ENCODE measurements at regions of chr14 and their contacts with region 1.

Region 1: GRCh38 chr14:69574263-69574953 is at the start of gene CCDC177:
- DNase-seq: peak; percentile 45 to 73
- H3K4me3 ChIP-seq: peak within 1 kb of the TSS; percentile 32; the same call in 1 of the 2 replicates
- H3K27ac ChIP-seq: no peak within 1 kb of the TSS
- H3K4me1 ChIP-seq: peaks cover 11% of the 10 kb centered on the region
- H3K27me3 ChIP-seq: peaks cover 16% of the 10 kb centered on the region
- CTCF ChIP-seq: peak; percentile 93
- total RNA-seq, gene CCDC177: not detected in 2 replicates

Region 2: DNA sequence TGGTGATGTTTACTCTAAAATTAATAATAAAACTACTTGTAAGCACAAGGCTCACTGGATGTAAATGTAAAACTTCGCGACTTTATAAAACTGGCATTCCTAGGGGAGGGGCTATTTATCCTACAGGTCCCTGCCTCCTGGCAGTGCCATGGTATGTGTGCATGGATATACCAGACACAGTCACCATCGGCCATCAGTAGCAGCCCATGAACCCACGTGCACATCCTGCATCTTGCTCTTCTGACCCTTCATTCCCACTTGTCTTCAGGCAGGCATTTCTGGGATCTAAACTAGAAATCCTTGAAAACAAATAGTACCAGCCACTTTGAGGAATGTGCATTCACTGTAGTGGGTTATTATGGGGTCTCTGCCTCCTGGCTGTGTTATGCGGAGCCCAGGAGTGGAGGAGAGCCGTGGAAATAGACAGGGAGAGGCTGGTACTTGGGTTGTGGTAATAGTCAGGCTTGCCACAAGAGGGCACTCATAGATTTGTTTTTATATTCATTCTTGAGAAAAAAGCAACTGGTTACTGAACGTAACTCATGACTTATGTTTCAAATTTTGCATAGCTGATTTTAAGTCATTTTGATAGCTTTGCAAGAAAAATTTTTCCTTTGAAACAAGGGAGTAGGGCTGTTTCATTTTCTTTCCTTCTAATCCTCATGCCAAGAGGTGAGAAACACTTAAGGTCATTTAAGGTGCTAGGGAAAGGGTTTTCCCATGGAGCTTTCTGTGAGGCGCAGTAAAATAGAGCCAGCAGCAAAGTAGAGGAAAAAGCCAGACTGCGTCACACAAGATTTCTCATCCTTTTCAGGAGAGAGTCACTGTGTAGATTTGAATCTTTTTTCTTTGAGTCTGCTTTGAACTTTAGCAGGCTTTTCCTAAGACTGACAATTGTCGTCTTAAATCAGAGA is 331.8 kb before region 1 on chr14:
- CTCF ChIA-PET with region 1: no interaction called
- POLR2A ChIA-PET with region 1: no interaction called
- intact Hi-C with region 1: loop called (anchors 1 kb)
- DNase-seq: peak in 1 of 2 experiments; percentile 47
- H3K4me3 ChIP-seq: no peak overlapping the region
- H3K27ac ChIP-seq: no peak overlapping the region
- H3K4me1 ChIP-seq: no peaks in the 10 kb centered on the region
- H3K27me3 ChIP-seq: no peaks in the 10 kb centered on the region
- CTCF ChIP-seq: peak; percentile 94

Region 3: DNA sequence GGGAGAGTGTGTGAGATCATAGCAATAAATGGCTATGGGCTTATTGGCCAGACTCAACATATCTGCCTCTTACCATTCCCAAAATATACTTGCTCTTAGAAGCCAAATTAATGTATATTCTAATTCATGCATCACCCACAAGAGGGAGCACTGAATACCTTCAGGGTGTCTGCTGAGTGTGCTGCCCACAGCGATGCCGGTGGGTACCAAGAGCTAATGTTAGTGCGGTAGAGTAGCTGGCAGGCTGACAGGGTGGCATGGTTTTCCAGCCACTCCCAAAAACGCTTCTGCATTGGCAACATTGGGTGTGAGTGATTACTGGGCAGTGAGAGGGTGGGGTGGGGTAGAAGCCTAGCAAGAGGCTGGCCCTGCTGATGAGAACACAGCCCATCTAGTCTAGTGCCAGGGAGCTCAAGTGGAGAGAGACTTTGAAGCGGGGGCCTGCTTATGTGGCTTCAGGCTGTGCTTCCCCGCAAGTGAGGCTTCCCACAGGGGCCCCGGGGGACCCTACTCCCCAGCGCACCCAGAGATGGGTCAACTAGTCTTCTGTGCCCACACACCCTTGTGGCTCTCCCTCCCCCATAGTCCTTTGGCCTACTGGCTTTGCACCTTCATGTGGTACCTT is 99.1 kb before region 1 on chr14:
- CTCF ChIA-PET with region 1: no interaction called
- POLR2A ChIA-PET with region 1: no interaction called
- intact Hi-C with region 1: loop called (anchors 5 kb)
- DNase-seq: no peak
- H3K4me3 ChIP-seq: no peak overlapping the region
- H3K27ac ChIP-seq: no peak overlapping the region
- H3K4me1 ChIP-seq: peaks cover 22% of the 10 kb centered on the region
- H3K27me3 ChIP-seq: no peaks in the 10 kb centered on the region
- CTCF ChIP-seq: peak; percentile 64

Region 4: DNA sequence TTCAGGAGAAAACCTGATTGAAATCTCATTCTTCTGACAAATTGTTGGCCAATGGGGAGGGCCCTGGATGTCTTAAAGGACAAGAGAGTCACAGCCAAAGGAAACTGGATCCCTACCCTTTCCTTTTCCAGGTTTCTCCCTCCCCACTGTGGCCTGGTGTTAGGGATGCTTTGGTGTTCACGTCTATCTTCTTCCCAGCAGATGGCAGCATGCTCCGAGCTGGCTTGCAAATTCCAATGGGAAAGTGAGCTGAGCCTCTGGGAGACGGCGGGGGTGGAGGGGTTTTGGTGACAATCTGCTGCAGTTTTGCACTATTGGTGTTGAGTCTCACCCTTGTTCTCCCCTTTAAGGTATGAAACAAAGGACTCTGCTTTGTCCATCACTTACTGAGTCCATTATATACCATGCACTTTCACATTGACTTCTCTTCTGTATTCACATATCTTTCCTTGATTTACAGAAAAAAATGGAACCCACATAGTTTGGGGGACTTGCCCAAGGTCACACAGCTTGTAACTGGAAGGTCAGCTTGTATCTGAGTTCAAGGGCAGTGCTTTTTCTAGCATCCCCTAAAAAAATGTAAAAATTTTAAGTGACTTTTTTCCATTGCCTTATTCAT is 39.1 kb before region 1 on chr14:
- CTCF ChIA-PET with region 1: interaction called, 14 read pairs
- POLR2A ChIA-PET with region 1: no interaction called
- intact Hi-C with region 1: loop called (anchors 1 kb)
- DNase-seq: peak in 1 of 2 experiments; percentile 34
- H3K4me3 ChIP-seq: no peak overlapping the region
- H3K27ac ChIP-seq: no peak overlapping the region
- H3K4me1 ChIP-seq: peaks cover 33% of the 10 kb centered on the region
- H3K27me3 ChIP-seq: no peaks in the 10 kb centered on the region
- CTCF ChIP-seq: peak; percentile 74

Measured in PC-9 (cell line).